ENCODE measurements at regions of chr1 and their contacts with region 1.

Region 1: DNA sequence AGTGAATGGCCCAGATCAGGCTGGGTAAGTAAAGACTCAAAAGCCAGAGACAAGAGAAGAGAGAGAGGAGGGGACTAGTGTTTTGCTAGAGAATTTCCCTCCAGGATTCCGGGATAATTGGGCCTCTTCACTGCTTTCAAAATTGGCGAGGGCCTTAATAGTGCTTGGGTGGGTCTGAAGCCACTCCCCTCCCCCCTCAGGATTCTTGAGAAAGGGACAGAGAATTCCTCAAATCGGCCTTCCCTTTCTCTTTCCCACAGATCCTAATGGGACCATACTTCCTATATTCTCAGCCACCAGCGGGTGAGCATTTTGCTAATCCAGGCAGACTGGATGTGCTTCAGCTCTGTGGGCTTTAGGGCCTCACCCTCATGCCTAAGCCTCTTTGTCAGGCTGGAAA is 11.9 kb downstream of the SFN start:
- DNase-seq: no peak
- H3K4me3 ChIP-seq: no peak overlapping the region
- H3K27ac ChIP-seq: no peak overlapping the region
- H3K4me1 ChIP-seq: peaks cover 10% of the 10 kb centered on the region
- CTCF ChIP-seq: no peak

Region 2: DNA sequence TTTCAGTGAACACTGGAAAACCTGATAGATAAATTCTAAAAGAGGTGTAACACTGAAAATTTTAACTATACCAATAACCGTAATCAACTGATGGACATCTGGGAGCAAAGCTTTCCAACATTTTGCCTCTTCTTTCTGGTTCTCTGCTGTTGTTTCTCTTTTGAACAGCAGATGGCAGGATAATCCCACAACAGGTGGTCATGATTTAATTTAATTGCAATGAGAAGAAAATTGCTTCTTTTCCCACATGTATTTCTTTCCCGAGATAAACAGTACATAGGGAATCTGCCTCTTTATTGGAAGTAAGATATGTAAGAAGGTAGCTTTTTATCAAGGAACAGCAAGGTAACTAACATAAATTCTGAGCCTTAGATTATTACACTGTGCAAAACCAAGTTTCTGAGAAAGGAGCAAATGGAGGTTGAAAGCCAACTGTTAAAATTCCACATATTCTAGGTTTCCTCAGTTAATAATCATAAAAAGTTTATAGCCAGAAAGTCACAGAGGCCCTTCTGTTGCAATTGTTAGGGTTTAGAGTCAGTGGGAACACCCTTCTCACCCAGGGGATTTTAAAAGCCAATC is 272.4 kb before region 1 on chr1:
- CTCF ChIA-PET with region 1: interaction called, 3 read pairs
- POLR2A ChIA-PET with region 1: no interaction called
- intact Hi-C with region 1: loop called (anchors 5 kb)
- DNase-seq: peak; percentile 77
- H3K4me3 ChIP-seq: no peak overlapping the region
- H3K27ac ChIP-seq: no peak overlapping the region
- H3K4me1 ChIP-seq: peaks cover 5% of the 10 kb centered on the region
- CTCF ChIP-seq: peak; percentile 98

Region 3: DNA sequence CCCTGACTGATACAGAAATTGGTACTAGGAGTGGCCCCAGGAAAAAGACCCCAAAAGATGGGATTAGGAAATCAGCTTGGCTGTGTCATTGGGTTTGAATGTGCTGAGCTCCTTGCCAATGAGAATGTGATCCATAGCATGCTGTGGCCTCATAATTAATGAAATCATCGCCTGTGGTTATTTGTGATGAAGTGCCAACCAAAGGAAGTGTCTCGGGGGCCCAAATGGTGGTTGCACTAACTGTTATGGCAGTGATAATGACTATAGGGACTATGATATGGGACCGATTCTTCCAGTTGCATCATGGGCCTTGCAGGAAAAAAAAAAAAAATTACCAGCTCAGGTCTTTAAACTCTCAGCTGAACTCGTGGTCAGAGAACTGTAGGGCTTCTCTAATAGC is 63.8 kb before region 1 on chr1:
- CTCF ChIA-PET with region 1: no interaction called
- POLR2A ChIA-PET with region 1: no interaction called
- intact Hi-C with region 1: loop called (anchors 1 kb)
- DNase-seq: no peak
- H3K4me3 ChIP-seq: no peak overlapping the region
- H3K27ac ChIP-seq: no peak overlapping the region
- H3K4me1 ChIP-seq: no peaks in the 10 kb centered on the region
- CTCF ChIP-seq: no peak

Region 4: GRCh38 chr1:26853156-26853555 is 21.7 kb before region 1 on chr1:
- CTCF ChIA-PET with region 1: no interaction called
- POLR2A ChIA-PET with region 1: interaction called, 3 read pairs
- intact Hi-C with region 1: loop called (anchors 1 kb)
- DNase-seq: peak; percentile 80
- H3K4me3 ChIP-seq: no peak overlapping the region
- H3K27ac ChIP-seq: no peak overlapping the region
- H3K4me1 ChIP-seq: no peaks in the 10 kb centered on the region
- CTCF ChIP-seq: peak; percentile 93

Region 5: DNA sequence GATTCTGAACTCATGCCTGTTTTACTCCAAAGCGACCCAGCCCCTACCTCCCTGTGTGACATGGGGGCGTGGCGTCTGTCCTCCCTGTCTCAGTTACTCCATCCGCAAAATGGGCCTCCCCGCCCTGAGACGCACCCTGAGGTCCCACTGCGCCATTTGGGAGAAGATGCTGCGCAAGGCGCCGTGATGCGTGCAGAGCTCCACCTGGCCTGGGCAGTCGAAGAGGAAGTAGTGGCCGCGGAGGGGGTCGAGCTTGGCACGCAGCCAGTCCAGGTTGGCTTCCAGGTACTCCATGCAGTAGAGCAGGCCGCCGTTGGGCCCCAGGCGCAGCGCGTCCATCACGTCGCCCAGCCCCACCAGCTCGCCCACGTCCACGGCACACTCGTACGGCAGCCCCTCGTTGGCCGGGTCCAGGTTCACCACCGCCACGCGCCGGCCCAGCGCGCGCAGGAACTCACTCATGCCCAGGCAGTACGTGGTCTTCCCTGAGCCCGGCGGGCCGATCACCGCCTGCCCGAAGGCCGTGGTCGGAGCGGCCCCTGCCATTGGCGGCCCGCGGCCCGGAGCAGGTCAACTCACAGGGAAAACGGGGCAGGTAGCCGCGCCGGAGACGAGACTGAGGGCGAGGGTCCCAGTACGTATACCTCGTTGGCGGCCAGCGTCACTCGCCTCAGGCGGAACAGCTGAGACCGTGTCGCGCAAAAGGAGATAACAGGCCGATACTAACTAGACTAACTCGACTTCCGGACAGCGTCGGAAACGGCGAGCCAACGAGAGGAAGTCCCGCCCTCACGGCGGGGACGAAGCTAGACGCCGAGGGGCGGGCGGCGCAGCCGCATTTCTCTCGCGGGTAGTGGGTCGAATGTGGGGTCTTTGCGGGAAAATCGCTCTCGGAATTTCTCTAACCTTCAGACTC is 14.9 kb after region 1 on chr1 and contains the start of gene GPN2:
- CTCF ChIA-PET with region 1: no interaction called
- POLR2A ChIA-PET with region 1: no interaction called
- intact Hi-C with region 1: no loop called
- DNase-seq: peak; percentile 87
- H3K4me3 ChIP-seq: peak within 1 kb of the TSS; percentile 93
- H3K27ac ChIP-seq: peak within 1 kb of the TSS; percentile 62
- H3K4me1 ChIP-seq: peaks cover 14% of the 10 kb centered on the region
- CTCF ChIP-seq: no peak
- total RNA-seq, gene GPN2: 17.5 and 18.1 TPM in 2 replicates

Measured in OCI-LY7 (cell line).